ENCODE measurements at regions of chr12 and their contacts with region 1.

Region 1: DNA sequence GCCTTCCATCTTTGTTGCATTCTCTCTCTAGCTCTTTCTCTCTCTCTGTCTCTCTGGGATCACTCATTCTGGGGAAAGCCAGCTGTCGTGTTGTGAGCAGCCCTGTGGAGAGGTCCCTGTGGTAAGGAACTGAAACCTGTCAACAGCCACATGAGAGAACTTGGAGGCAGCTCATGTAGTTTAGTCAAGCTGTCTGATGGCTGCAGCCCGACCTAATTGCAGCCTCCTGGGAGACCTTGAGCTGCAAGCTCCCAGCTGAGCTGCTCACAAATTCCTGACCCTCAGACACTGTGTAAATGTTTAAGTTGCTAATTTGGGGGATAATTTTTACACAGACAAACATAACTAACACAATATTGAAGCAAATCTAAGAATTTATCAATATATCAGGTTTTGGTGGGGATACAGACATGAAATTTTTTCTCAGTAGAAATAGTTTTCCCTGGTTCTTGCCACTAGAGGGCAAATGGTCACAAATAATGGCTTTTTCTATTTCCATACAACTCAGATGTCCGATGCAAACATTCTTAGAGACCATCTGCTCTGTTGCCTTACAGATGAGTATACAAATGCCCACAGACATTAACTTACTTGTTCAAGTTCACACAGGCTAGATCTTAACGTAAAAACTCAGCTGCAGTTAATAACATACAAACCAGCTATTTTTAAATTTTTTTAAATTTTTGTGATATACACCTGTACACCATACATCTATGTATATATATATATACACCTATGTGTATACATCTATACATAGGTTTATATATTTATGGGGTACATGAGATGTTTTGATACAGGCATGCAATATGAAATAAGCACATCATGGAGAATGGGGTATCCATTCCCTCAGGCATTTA is 15.5 kb upstream of the KRR1 start:
- DNase-seq: peak; percentile 54
- ATAC-seq: peak; percentile 98
- H3K4me3 ChIP-seq: no peak overlapping the region
- H3K27ac ChIP-seq: no peak overlapping the region
- H3K4me1 ChIP-seq: no peaks in the 10 kb centered on the region; the same call in 1 of the 2 replicates
- H3K27me3 ChIP-seq: no peaks in the 10 kb centered on the region
- CTCF ChIP-seq: peak; percentile 53 to 73 (median 62); a peak in 5 of 6 replicates
- EP300 ChIP-seq: peak; percentile 36 to 58; a peak in 1 of 4 replicates
- POLR2A ChIP-seq: no peak
- RAD21 ChIP-seq: peak; percentile 82

Region 2: DNA sequence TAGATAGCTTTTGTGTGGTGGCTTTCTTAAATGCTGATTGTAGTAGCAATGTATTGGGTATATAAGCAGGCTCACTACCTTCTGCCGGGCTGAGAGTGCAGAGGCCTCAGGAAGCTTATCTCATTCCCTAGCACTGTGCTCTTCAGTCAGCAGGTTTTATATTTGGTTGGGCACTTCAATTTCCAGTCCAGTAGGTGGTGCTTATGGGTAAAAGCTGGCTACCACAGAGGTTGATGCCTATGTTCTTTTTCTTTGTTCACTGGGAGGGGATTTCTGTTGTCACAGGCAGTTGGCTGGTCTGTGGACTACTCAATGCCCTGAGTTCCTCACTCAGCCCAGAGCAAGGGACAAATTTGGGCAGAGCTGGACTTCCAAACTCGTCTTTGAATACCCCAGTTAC is 89.3 kb before region 1 on chr12:
- CTCF ChIA-PET with region 1: no interaction called
- POLR2A ChIA-PET with region 1: no interaction called
- RAD21 ChIA-PET with region 1: no interaction called
- SMC1A ChIA-PET with region 1: no interaction called
- in situ Hi-C with region 1: no loop called
- intact Hi-C with region 1: no loop called
- DNase-seq: no peak
- ATAC-seq: peak; percentile 93
- H3K4me3 ChIP-seq: no peak overlapping the region
- H3K27ac ChIP-seq: no peak overlapping the region
- H3K4me1 ChIP-seq: no peaks in the 10 kb centered on the region
- H3K27me3 ChIP-seq: no peaks in the 10 kb centered on the region
- CTCF ChIP-seq: peak; percentile 35 to 42 (median 41); a peak in 3 of 6 replicates
- EP300 ChIP-seq: no peak
- POLR2A ChIP-seq: no peak
- RAD21 ChIP-seq: peak; percentile 48

Region 3: DNA sequence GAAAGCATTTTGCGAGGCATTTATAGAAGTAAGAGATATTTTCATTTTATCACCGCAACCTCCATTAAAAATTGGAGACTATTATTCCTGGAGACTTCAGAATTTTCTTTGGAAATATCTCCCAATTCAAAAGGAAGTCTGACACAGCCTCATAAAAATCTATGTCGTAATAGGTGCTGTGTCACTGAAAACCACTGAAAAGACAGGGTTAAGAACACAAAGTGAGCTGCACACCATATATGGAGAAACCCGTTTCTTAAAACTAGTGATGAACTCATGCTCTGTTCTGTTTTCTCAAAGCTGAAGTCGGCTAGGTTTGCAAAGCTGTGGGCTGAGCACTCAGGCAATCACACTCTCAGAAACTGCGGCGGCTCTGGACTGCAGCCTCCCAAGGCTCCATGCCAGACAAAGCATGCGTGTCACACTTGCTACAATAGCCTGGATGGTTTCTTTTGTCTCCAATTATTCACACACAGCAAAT is 46.4 kb before region 1 on chr12 and contains the start of gene GLIPR1:
- CTCF ChIA-PET with region 1: interaction called, 66 read pairs
- POLR2A ChIA-PET with region 1: interaction called, 3 read pairs
- RAD21 ChIA-PET with region 1: interaction called, 39 read pairs
- SMC1A ChIA-PET with region 1: interaction called, 59 read pairs
- in situ Hi-C with region 1: no loop called
- intact Hi-C with region 1: no loop called
- DNase-seq: peak; percentile 72
- ATAC-seq: peak; percentile 85
- H3K4me3 ChIP-seq: peak within 1 kb of the TSS; percentile 83
- H3K27ac ChIP-seq: peak within 1 kb of the TSS; percentile 88
- H3K4me1 ChIP-seq: peaks cover 28% of the 10 kb centered on the region
- H3K27me3 ChIP-seq: no peaks in the 10 kb centered on the region
- CTCF ChIP-seq: no peak
- EP300 ChIP-seq: no peak; a peak in 1 of 4 replicates
- POLR2A ChIP-seq: peak; percentile 91
- RAD21 ChIP-seq: no peak
- polyA plus RNA-seq, gene GLIPR1: 39.8 to 62.6 TPM

Region 4: GRCh38 chr12:75542942-75543341 is 16.1 kb after region 1 on chr12:
- CTCF ChIA-PET with region 1: interaction called, 11 read pairs
- POLR2A ChIA-PET with region 1: no interaction called
- RAD21 ChIA-PET with region 1: interaction called, 7 read pairs
- SMC1A ChIA-PET with region 1: interaction called, 7 read pairs
- in situ Hi-C with region 1: no loop called
- intact Hi-C with region 1: no loop called
- DNase-seq: no peak
- ATAC-seq: no peak
- H3K4me3 ChIP-seq: no peak overlapping the region
- H3K27ac ChIP-seq: no peak overlapping the region
- H3K4me1 ChIP-seq: no peaks in the 10 kb centered on the region
- H3K27me3 ChIP-seq: no peaks in the 10 kb centered on the region
- CTCF ChIP-seq: no peak
- EP300 ChIP-seq: no peak
- POLR2A ChIP-seq: no peak
- RAD21 ChIP-seq: no peak

Region 5: DNA sequence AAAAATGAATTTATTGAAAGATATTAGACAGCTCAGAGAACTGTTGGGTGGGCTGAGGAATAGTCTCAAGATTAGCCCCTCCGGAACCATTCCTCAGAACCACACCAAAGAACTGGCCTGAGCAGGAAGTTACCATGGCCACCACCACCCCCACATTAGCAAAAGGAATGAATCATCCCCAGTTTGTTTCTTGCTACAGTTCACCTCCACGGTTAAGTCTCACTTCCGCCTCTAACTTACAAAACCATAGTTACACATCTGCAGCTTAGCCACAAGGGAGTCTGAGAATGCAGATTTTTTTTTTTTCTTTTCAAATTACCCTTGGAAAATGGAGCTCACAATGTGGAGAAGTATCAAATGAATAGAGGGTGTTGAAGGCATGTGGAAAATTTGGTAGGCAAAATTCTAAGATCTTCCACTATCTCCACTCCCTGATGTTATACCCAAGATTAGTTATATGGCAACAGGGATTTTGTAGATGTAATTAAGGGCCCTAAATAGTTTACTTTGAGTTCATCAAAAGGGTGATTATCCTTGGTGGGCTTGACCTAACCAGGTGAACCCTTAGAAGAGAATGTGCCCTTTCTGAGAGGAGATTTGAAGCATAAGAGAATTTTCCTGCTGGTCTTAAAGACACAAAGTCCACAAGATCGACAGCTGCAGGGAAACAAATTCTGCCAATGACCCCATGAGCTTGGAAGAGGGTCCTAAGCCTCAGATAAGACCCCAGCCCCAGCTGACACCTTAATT is 114.3 kb after region 1 on chr12:
- CTCF ChIA-PET with region 1: interaction called, 4 read pairs
- POLR2A ChIA-PET with region 1: interaction called, 7 read pairs
- RAD21 ChIA-PET with region 1: interaction called, 37 read pairs
- SMC1A ChIA-PET with region 1: interaction called, 8 read pairs
- in situ Hi-C with region 1: no loop called
- intact Hi-C with region 1: loop called (anchors 5 kb)
- DNase-seq: peak; percentile 87
- ATAC-seq: peak; percentile 96
- H3K4me3 ChIP-seq: no peak overlapping the region
- H3K27ac ChIP-seq: peak overlapping the region; percentile 76
- H3K4me1 ChIP-seq: peaks cover 22% of the 10 kb centered on the region
- H3K27me3 ChIP-seq: no peaks in the 10 kb centered on the region
- CTCF ChIP-seq: no peak
- EP300 ChIP-seq: peak; percentile 91 to 92
- POLR2A ChIP-seq: no peak
- RAD21 ChIP-seq: peak; percentile 40; the same call in 1 of the 2 replicates

Region 6: GRCh38 chr12:75690296-75690955 is 163.5 kb after region 1 on chr12:
- CTCF ChIA-PET with region 1: no interaction called
- POLR2A ChIA-PET with region 1: no interaction called
- RAD21 ChIA-PET with region 1: no interaction called
- SMC1A ChIA-PET with region 1: no interaction called
- in situ Hi-C with region 1: no loop called
- intact Hi-C with region 1: no loop called
- DNase-seq: no peak
- ATAC-seq: no peak
- H3K4me3 ChIP-seq: no peak overlapping the region
- H3K27ac ChIP-seq: no peak overlapping the region
- H3K4me1 ChIP-seq: no peaks in the 10 kb centered on the region
- H3K27me3 ChIP-seq: no peaks in the 10 kb centered on the region
- CTCF ChIP-seq: no peak
- EP300 ChIP-seq: no peak
- POLR2A ChIP-seq: no peak
- RAD21 ChIP-seq: no peak

Region 7: GRCh38 chr12:75814851-75815754 is 288.2 kb after region 1 on chr12:
- CTCF ChIA-PET with region 1: interaction called, 5 read pairs
- POLR2A ChIA-PET with region 1: no interaction called
- RAD21 ChIA-PET with region 1: interaction called, 13 read pairs
- SMC1A ChIA-PET with region 1: interaction called, 19 read pairs
- in situ Hi-C with region 1: no loop called
- intact Hi-C with region 1: loop called (anchors 5 kb)
- DNase-seq: no peak
- ATAC-seq: peak; percentile 74
- H3K4me3 ChIP-seq: no peak overlapping the region
- H3K27ac ChIP-seq: no peak overlapping the region
- H3K4me1 ChIP-seq: peaks cover 4% of the 10 kb centered on the region; the same call in 1 of the 2 replicates
- H3K27me3 ChIP-seq: no peaks in the 10 kb centered on the region
- CTCF ChIP-seq: no peak
- EP300 ChIP-seq: no peak
- POLR2A ChIP-seq: no peak
- RAD21 ChIP-seq: no peak

Region 8: DNA sequence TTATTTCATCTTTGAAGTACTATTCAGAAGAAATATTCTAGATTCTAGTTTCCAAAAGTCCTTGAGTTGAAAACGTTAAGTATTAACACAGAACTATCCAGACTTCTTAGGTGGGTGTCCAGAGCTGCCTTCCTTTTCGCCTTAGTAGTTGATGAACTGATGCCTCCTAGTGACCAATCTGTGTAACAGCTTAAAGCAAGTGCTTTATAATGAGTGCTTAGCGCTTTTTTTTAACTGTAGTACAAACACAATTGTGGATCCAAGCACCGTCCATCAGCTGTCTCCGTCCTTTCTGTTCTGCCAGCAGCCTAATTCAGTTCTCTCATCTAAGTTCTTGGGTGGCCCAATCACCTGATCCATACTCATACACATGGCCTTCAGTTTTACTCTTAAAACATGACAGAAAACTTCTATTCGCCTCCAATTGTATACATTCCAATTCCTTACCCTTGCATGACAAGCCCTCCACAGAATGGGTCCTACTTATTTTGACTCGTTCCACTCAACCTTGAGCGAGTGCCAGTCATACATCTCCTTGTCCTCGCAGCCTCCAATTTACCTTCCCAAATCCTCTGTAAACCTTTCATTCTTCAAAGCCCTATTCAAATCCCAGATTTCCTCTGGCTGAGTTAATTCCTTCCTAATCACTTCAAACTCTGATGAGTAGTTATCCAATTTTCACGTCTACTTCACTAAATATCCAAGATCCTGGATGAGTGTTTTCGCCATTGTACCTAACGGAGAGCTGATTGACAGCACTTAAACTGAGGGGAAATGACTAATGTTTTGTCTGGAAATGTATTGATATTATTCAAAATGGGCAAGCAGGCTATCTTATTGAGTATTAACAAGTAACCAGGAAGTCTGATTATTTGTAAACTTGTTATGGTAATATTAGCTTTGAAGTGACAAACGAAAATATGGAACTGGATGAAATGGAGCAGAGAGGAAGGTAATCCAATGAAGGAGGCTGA is 510.5 kb after region 1 on chr12:
- CTCF ChIA-PET with region 1: interaction called, 144 read pairs
- POLR2A ChIA-PET with region 1: interaction called, 23 read pairs
- RAD21 ChIA-PET with region 1: interaction called, 144 read pairs
- SMC1A ChIA-PET with region 1: interaction called, 268 read pairs
- in situ Hi-C with region 1: loop called (anchors 5 kb)
- intact Hi-C with region 1: loop called (anchors 1 kb)
- DNase-seq: peak; percentile 34
- ATAC-seq: peak; percentile 68
- H3K4me3 ChIP-seq: no peak overlapping the region
- H3K27ac ChIP-seq: no peak overlapping the region
- H3K4me1 ChIP-seq: peaks cover 5% of the 10 kb centered on the region
- H3K27me3 ChIP-seq: no peaks in the 10 kb centered on the region
- CTCF ChIP-seq: peak; percentile 74 to 84 (median 81)
- EP300 ChIP-seq: no peak
- POLR2A ChIP-seq: no peak
- RAD21 ChIP-seq: peak; percentile 96

Region 9: DNA sequence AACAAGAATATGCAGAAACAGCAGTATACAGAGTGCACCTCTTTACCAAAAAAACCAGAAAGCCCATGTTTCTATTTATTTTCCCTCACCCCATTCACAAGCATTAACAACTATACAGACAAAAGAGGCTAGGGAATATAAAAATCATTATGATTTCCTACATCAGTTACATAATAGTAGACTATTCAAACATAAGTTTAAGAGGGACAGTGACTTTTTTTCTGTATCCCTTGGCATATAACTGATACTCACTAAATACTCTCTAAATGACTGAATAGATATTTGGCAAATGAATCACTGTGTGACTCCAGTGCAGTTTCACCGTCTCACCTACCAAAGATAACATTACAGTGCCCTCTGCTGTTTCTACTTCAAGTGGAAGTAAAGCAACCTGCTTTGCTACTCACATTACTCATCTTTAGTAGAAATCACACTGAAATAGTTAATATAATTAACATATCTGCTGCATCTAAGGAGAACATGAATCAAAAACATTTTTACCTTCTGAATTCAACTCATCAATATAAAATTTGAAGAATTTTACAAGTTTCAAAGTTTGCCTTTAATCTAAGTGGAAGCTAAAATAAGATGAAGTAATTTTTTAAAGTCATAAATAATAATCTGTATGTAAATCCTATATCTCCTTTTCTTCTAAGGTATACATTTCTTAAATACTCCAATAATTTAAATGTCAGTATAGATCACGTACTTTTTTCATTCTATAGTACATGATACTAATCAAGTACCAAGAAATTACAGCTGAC is 928.9 kb after region 1 on chr12:
- CTCF ChIA-PET with region 1: interaction called, 33 read pairs
- POLR2A ChIA-PET with region 1: no interaction called
- RAD21 ChIA-PET with region 1: interaction called, 21 read pairs
- SMC1A ChIA-PET with region 1: interaction called, 18 read pairs
- in situ Hi-C with region 1: no loop called
- intact Hi-C with region 1: loop called (anchors 5 kb)
- DNase-seq: peak; percentile 33
- ATAC-seq: peak; percentile 99
- H3K4me3 ChIP-seq: no peak overlapping the region
- H3K27ac ChIP-seq: no peak overlapping the region
- H3K4me1 ChIP-seq: no peaks in the 10 kb centered on the region
- H3K27me3 ChIP-seq: no peaks in the 10 kb centered on the region
- CTCF ChIP-seq: peak; percentile 54 to 73 (median 71); a peak in 5 of 6 replicates
- EP300 ChIP-seq: no peak
- POLR2A ChIP-seq: no peak
- RAD21 ChIP-seq: peak; percentile 89

Measured in GM12878 (cell line).